Ascending aorta (tissue), 2 donors: ENCODE measurements at regions of chrX and their contacts with region 1.

Region 1: DNA sequence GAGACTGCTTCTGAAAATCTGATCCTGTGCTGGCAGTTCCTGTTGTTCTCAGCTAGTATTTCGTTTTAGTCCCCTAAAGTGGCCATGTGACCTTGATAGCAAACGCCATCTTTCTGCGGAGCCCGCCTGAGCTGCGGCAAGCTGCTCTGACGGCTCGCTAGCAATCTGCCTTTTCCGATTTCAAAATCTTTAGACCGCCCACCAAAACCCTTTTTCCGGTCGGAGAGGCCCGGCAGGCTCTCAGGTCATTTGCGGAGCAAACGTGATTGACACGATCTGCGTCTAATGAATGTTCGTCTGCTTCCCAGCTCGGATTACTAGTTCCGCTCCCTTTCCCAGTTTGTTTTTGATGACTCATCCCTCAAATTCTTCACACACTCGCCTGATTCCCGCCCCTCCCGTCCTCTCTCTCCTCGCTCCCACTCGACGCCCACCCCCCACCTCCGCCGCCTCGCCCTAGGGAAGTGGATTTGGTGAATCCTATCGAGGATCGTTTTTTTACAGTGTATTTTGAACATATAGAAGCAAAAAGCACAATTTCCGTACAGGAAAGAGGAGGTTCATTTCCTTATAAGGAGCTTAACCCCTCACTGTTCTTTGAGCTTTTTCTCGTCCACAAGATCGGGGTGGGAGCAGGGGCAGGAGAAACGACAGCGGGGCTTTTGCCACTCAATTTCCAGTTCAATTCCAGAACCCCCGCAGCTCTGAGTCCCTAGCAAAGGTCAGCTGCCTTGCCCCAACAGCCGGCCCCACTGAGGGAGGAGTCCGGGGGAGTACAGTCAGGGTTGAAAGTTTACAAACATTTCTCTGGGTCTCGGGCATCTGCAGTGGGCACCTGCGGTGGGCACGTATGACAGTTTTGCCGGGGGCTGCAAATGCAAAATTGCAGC is 37.5 kb downstream of the NLGN3 start:
- DNase-seq: peak; percentile 54 to 92
- H3K4me3 ChIP-seq: peak overlapping the region; percentile 50 to 62
- H3K27ac ChIP-seq: peak overlapping the region; percentile 76 to 77
- H3K4me1 ChIP-seq: no peaks in the 10 kb centered on the region
- H3K27me3 ChIP-seq: no peaks in the 10 kb centered on the region
- CTCF ChIP-seq: no peak

Region 2: DNA sequence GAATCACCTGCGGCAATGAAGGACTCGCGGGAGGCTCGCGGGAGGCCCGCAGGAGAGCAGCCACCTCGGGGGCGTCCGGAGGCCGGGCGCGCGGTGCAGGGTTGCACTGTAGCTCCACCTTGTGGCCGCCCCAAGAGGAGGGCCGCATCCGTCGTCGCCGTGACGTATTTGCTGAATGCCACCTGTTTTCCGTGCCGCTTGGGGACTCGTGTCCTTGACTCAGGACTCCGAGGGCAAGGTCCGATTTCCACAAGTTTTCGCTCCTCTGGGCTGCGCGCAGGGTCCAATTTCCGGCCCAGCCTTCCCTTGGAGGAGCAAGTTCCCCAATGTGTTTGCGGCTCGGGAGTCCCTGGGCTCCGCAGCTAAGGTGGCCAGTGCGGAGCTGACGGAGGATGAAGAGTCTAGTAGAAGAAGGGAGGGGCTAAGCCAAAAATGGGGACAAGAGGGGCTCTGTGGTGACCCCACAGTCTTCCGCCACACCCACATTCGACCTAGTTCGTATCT is 748.3 kb before region 1 on chrX:
- intact Hi-C with region 1: loop called (anchors 10 kb)
- DNase-seq: peak; percentile 32 to 86
- H3K4me3 ChIP-seq: peak overlapping the region; percentile 51 to 58
- H3K27ac ChIP-seq: peak overlapping the region; percentile 85 to 93
- H3K4me1 ChIP-seq: peaks cover 0 to 11% of the 10 kb centered on the region in 2 donors
- H3K27me3 ChIP-seq: no peaks in the 10 kb centered on the region
- CTCF ChIP-seq: peak; percentile 58 to 70 (median 63)

Region 3: GRCh38 chrX:71068049-71068763 is 113.9 kb before region 1 on chrX and contains the start of gene SNX12:
- intact Hi-C with region 1: loop called (anchors 1 kb)
- DNase-seq: peak; percentile 84 to 96
- H3K4me3 ChIP-seq: peak within 1 kb of the TSS; percentile 55 to 68
- H3K27ac ChIP-seq: peak within 1 kb of the TSS; percentile 70 to 85
- H3K4me1 ChIP-seq: peaks cover 0 to 4% of the 10 kb centered on the region in 2 donors
- H3K27me3 ChIP-seq: no peaks in the 10 kb centered on the region
- CTCF ChIP-seq: peak in 1 of 3 experiments; percentile 92
- total RNA-seq, gene SNX12: 31.2 TPM

Region 4: GRCh38 chrX:71254092-71254941 is 72.2 kb after region 1 on chrX and contains the start of gene ZMYM3:
- intact Hi-C with region 1: loop called (anchors 1 kb)
- DNase-seq: peak; percentile 57 to 89
- H3K4me3 ChIP-seq: peak within 1 kb of the TSS; percentile 51 to 73
- H3K27ac ChIP-seq: peak within 1 kb of the TSS; percentile 77 to 91
- H3K4me1 ChIP-seq: peaks cover 2 to 8% of the 10 kb centered on the region in 2 donors
- H3K27me3 ChIP-seq: no peaks in the 10 kb centered on the region
- CTCF ChIP-seq: no peak
- total RNA-seq, gene ZMYM3: 12.5 TPM

Region 5: DNA sequence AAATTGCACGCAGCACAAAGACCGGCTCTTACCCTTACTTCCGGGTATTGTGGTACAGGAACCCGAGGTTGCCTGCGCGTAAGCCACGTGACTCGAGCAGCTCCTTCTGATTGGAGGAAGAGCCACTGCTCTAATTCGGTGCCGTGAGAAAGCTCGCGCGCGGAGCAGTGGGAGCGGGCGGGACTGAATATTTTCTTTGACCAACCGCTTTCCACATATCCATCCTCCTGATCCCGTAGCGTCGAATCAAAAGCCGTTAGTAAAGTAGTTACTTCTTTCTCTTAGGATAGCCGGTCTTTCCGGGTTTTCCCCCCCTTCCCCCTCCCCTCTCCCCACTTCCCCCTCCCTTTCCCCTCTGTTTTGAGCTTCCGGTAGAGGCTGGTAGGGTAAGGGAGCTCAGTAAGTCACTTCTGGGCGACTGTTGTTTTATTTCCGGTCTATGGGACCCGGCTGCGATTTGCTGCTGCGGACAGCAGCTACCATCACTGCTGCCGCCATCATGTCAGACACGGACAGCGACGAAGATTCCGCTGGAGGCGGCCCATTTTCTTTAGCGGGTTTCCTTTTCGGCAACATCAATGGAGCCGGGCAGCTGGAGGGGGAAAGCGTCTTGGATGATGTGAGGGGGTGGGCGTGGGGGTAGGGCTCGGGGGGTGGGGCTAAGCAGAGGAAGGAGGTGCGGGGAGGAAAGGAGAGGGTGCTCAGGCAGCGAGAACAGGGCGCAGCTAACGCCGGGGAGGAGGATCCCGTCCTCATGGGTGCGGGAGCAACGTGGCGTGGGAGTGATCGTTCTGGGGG is 183.9 kb after region 1 on chrX and contains the start of gene TAF1:
- intact Hi-C with region 1: loop called (anchors 10 kb)
- DNase-seq: peak; percentile 87 to 97
- H3K4me3 ChIP-seq: peak within 1 kb of the TSS; percentile 58 to 82
- H3K27ac ChIP-seq: peak within 1 kb of the TSS; percentile 87 to 95
- H3K4me1 ChIP-seq: peaks cover 0 to 5% of the 10 kb centered on the region in 2 donors
- H3K27me3 ChIP-seq: no peaks in the 10 kb centered on the region
- CTCF ChIP-seq: no peak
- total RNA-seq, gene TAF1: 63.2 TPM